Activated CD4-positive, alpha-beta T cell treated with anti-CD3 and anti-CD28 coated beads for 36 hours (primary cell): ENCODE measurements at regions of chr13 and their contacts with region 1.

Region 1: GRCh38 chr13:51452361-51453206 is at the start of gene INTS6:
- DNase-seq: peak; percentile 99
- ATAC-seq: peak; percentile 87
- H3K4me3 Mint-ChIP-seq: peak within 1 kb of the TSS; percentile 84
- H3K27ac Mint-ChIP-seq: peak within 1 kb of the TSS; percentile 97
- H3K4me1 Mint-ChIP-seq: peaks cover 33% of the 10 kb centered on the region
- H3K27me3 Mint-ChIP-seq: no peaks in the 10 kb centered on the region
- total RNA-seq, gene INTS6: 47.9 to 50.3 TPM

Region 2: GRCh38 chr13:49996951-49997895 is 1455.4 kb before region 1 on chr13 and contains the start of gene TRIM13:
- CTCF ChIA-PET with region 1: no interaction called
- POLR2A ChIA-PET with region 1: no interaction called
- intact Hi-C with region 1: loop called in 1 of 2 experiments (anchors 2 kb)
- DNase-seq: peak; percentile 90
- ATAC-seq: peak; percentile 86
- H3K4me3 Mint-ChIP-seq: peak within 1 kb of the TSS; percentile 77
- H3K27ac Mint-ChIP-seq: peak within 1 kb of the TSS; percentile 76
- H3K4me1 Mint-ChIP-seq: peaks cover 47% of the 10 kb centered on the region
- H3K27me3 Mint-ChIP-seq: no peaks in the 10 kb centered on the region
- total RNA-seq, gene TRIM13: 10.6 to 12.9 TPM

Region 3: DNA sequence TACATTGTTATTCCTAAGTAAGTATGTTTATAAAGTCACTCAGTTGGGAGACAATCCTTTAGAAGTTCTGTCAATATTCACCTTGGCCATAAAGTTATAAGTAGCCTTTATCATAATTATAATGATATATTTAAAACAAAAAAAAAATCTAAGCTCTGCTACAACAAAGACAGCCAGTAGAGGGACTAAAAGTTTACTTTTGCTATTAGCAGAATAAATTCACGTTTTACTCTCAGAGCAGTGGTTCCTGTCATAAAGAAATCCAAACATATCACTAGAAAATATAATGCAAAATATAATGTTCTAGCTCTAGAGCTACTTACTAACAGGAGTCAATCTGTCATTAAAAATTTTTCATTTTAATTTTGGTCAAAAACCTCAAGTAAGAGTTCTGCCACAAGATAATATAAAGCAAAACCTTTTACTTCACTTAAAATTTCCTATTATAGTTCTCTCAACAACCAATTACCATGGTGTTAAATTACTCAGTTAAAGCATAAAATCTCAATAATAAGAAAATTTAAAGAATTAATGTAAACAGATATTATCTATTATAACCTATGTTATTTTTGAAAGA is 17.5 kb before region 1 on chr13:
- CTCF ChIA-PET with region 1: interaction called, 9 read pairs
- POLR2A ChIA-PET with region 1: interaction called, 3 read pairs
- intact Hi-C with region 1: loop called (anchors 1 to 2 kb)
- DNase-seq: no peak
- ATAC-seq: no peak
- H3K4me3 Mint-ChIP-seq: no peak overlapping the region
- H3K27ac Mint-ChIP-seq: no peak overlapping the region
- H3K4me1 Mint-ChIP-seq: peaks cover 14% of the 10 kb centered on the region
- H3K27me3 Mint-ChIP-seq: no peaks in the 10 kb centered on the region

Region 4: GRCh38 chr13:51614350-51614786 is 161.8 kb after region 1 on chr13:
- CTCF ChIA-PET with region 1: interaction called, 3 read pairs
- POLR2A ChIA-PET with region 1: interaction called, 21 read pairs
- intact Hi-C with region 1: loop called in 1 of 2 experiments (anchors 1 kb)
- DNase-seq: peak; percentile 77
- ATAC-seq: peak; percentile 95
- H3K4me3 Mint-ChIP-seq: peak overlapping the region; percentile 73
- H3K27ac Mint-ChIP-seq: peak overlapping the region; percentile 91
- H3K4me1 Mint-ChIP-seq: peaks cover 23% of the 10 kb centered on the region
- H3K27me3 Mint-ChIP-seq: no peaks in the 10 kb centered on the region

Region 5: DNA sequence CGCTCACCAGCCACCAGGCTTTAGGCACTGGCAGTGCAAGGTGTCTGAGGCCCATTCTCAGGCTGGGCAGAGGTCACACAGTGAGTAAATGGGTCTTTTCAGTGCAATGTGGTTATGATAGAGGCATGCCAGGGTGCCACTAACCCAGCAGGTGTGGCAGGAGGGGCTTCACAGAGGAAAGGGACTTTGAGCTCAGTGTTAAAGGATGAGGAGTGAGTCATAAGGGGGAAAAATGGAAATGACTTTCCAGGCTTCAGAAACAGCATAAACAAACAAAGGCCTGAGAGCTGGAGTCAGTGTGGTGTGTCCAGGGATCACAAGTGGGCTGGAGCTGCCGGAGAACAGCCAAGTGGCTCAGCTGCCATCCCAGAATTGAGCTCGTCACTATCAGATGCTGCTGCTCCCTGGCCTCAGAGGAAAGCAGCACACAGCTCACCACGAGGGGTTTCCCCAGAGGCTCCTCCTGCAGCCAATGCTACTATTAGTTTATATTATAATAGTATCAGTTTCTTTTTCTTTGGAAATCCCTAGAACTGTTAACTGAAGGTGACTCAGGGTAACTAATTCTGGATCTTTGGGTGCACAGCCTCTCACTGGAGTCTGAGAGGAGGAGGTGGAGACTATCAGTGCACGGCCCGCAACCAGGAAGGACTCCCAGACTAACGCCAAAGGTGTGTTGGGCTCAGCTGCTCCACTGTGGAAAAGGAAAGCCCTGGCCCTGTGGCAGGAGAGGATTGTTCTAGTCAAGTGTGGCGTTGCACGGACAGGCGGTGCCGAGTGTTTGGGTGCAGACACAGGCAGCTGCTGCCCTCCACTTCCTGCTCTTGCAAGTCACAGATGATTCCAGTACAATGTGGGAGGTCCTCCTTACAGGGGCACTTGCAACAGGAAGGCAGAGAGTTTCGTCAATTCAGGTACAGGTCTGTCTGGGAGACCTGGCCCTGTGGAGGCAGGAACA is 311.9 kb after region 1 on chr13:
- CTCF ChIA-PET with region 1: interaction called, 3 read pairs
- POLR2A ChIA-PET with region 1: interaction called, 15 read pairs
- intact Hi-C with region 1: loop called (anchors 1 to 10 kb)
- DNase-seq: peak; percentile 83
- ATAC-seq: peak; percentile 91
- H3K4me3 Mint-ChIP-seq: peak overlapping the region; percentile 74
- H3K27ac Mint-ChIP-seq: peak overlapping the region; percentile 97
- H3K4me1 Mint-ChIP-seq: peaks cover 45% of the 10 kb centered on the region
- H3K27me3 Mint-ChIP-seq: no peaks in the 10 kb centered on the region

Region 6: DNA sequence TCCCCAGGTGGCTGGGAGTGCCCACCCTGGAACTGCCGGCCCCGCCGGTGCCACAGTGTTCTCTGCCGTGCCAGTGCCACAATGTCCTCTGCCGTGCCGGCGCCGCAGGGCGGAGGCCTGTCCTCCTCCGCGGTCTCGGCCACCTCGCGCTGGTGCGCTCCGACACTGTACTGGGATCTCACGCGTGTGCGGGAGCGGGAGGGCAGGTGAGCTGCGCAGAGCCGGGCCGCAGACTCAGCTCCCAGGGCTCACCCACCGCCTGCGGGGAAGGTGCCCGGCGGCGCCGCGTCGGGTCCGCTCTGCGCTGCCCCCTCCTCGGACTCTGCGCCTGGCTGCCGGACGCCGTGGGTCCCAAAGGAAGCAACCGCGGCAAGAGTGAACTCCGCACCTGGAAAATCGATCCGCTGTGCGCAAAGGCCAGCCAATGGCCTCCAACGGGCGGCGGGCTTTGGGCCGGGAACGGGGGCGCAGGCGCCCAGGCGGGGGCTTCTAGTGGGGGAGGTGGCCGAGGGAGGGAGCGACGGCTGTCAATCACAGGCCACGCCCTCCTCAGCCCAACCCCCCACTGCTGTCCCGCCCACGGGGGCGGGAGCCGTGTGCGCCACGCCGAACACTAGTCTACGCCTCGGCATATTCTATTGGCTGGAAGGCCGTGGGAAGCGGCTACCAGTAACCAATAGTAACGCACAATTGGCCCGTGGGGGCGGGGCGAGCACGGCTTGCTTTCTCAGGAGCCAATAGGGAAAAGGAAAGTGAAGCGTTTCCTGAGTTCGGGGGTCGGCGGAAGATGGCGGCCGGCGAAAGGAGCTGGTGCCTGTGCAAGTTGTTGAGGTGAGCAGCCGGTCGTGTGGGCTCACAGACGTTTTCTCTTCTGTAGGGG is 559.3 kb after region 1 on chr13 and contains the start of gene ALG11:
- CTCF ChIA-PET with region 1: no interaction called
- POLR2A ChIA-PET with region 1: no interaction called
- intact Hi-C with region 1: loop called in 1 of 2 experiments (anchors 2 kb)
- DNase-seq: peak; percentile 100
- ATAC-seq: peak; percentile 99
- H3K4me3 Mint-ChIP-seq: peak within 1 kb of the TSS; percentile 100
- H3K27ac Mint-ChIP-seq: peak within 1 kb of the TSS; percentile 91
- H3K4me1 Mint-ChIP-seq: peaks cover 20% of the 10 kb centered on the region
- H3K27me3 Mint-ChIP-seq: peaks cover 17% of the 10 kb centered on the region
- total RNA-seq, gene ALG11: 14.1 to 18.1 TPM

Region 7: DNA sequence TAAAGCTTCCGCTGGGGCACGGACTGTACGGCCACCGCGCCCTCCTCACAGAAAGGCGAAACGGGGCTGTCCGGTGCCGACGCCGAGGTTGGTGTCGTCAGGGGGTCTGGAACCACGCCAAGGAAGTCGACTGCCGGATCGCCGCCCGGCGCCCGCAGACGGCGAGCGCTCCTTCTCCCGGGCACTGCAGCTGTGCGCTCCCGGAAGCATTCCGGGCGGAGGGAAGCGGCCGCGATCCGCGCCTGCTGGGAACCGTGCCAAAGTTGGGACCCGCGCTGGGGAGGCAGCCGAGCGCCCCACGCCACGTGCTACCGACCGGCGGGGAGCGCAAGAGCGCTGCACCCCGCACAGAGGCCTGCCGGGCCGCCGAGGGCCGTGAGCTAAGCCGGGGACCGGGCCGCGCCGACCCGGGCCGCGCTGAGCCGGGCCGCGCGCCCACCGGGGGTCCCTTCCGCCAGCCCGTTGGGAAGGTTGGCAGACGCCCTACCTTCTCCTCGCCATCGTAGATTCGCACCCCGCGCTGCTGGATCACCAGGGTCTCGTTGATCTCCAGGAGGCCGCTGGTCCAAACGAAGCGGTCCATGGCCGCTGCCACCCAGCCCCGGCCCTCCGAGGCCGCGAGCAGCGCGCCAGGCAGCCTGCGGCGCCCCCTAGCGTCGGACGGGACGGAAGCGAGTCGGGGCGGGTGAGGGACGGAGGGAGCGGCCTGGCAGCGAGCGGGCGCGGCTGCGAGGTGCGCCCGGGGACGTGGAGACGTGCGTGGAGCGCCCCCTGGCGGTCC is 997.6 kb after region 1 on chr13 and contains the start of gene VPS36:
- CTCF ChIA-PET with region 1: interaction called, 3 read pairs
- POLR2A ChIA-PET with region 1: no interaction called
- intact Hi-C with region 1: loop called in 1 of 2 experiments (anchors 1 kb)
- DNase-seq: peak; percentile 96
- ATAC-seq: peak; percentile 77
- H3K4me3 Mint-ChIP-seq: peak within 1 kb of the TSS; percentile 88
- H3K27ac Mint-ChIP-seq: peak within 1 kb of the TSS; percentile 91
- H3K4me1 Mint-ChIP-seq: peaks cover 35% of the 10 kb centered on the region
- H3K27me3 Mint-ChIP-seq: peaks cover under 1% of the 10 kb centered on the region
- total RNA-seq, gene VPS36: 27.4 to 29.8 TPM